PC-9 (cell line): ENCODE measurements at regions of chr1 and their contacts with region 1.

Region 1: DNA sequence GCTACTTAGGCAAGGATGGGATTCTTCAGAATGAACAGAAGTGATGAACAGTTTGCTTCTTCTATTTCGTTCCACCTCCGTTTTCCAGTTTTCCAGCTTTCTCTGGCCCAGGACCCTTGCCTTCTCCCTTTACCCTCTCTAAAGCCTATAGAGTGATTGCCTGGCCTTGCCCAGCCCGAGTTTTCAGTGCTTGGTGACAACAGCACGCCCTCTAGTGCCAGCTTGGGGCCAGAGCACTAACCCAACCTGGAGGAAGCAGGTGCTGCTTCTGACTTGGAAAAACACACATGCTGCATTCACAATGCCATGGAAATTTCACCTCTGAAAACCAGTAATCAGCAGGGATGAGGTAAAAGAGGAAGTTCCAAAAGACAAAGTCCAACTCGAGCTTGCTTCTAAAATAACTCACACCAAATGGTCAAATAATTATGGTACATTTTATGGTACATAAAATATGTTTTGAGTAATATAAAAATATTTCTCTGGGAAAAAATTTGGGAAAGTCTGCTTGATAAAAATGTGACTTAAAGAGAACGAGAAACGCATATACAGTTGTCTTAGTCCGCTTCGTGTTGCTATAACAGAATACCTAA is 26.1 kb downstream of the UBE2T start:
- DNase-seq: peak; percentile 45 to 72
- H3K4me3 ChIP-seq: no peak overlapping the region
- H3K27ac ChIP-seq: no peak overlapping the region
- H3K4me1 ChIP-seq: no peaks in the 10 kb centered on the region
- H3K27me3 ChIP-seq: no peaks in the 10 kb centered on the region
- CTCF ChIP-seq: peak; percentile 95

Region 2: GRCh38 chr1:202184750-202185460 is 130.8 kb before region 1 on chr1:
- CTCF ChIA-PET with region 1: interaction called, 6 read pairs
- POLR2A ChIA-PET with region 1: no interaction called
- intact Hi-C with region 1: loop called (anchors 1 kb)
- DNase-seq: peak; percentile 81 to 84
- H3K4me3 ChIP-seq: no peak overlapping the region
- H3K27ac ChIP-seq: no peak overlapping the region
- H3K4me1 ChIP-seq: no peaks in the 10 kb centered on the region
- H3K27me3 ChIP-seq: peaks cover 5% of the 10 kb centered on the region; the same call in 1 of the 2 replicates
- CTCF ChIP-seq: peak; percentile 85

Region 3: DNA sequence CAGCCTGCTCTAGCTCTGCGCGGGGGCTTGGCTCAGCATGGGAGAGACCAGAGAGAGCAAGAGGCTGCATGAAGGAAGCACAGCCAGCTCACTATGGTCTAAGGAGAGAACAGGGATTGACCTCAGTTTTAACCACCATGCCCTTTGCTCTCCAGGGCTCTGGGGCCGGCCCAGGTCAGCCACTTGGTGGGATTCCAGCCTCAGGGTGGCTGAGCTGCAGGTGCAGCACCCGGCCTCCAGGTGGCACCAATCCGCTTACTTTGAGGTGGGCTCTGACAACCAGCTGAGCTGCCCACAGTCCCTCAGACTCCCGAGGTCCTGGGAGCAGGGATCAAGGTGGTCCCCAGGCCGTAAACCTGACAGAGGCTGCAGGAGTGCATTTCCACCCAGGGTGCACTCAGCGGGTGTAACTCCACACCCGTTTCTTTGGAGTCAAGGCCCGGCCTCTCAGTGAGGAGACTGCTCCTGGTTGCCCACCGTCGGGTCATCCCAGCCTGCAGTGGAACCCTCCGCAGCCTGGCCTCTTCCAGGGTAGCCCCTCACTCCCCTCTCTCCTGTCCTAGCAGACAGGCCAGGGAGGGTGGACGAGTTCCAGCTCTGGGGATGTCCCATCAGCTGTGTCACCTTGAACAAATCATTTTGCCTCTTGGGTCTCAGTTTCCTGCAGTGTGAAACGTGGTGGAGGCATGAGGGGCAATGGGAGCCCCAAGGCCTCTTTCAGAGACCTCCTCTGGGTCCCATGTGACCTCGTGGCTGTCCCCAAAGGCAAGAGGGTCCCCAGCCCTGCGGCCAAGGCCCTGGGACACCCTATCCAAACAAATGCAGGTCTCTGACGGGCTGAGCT is 122.7 kb before region 1 on chr1:
- CTCF ChIA-PET with region 1: interaction called, 15 read pairs
- POLR2A ChIA-PET with region 1: interaction called, 3 read pairs
- intact Hi-C with region 1: loop called (anchors 1 kb)
- DNase-seq: peak; percentile 41 to 71
- H3K4me3 ChIP-seq: no peak overlapping the region
- H3K27ac ChIP-seq: no peak overlapping the region
- H3K4me1 ChIP-seq: peaks cover 5% of the 10 kb centered on the region
- H3K27me3 ChIP-seq: peaks cover 7% of the 10 kb centered on the region; the same call in 1 of the 2 replicates
- CTCF ChIP-seq: peak; percentile 92

Region 4: GRCh38 chr1:202274611-202275010 is 41.1 kb before region 1 on chr1:
- CTCF ChIA-PET with region 1: no interaction called
- POLR2A ChIA-PET with region 1: no interaction called
- intact Hi-C with region 1: loop called (anchors 5 kb)
- DNase-seq: peak; percentile 24 to 34
- H3K4me3 ChIP-seq: no peak overlapping the region
- H3K27ac ChIP-seq: no peak overlapping the region
- H3K4me1 ChIP-seq: 0 out of 2 replicates have a peak, but pooled peaks cover 2% of the 10 kb centered on the region
- H3K27me3 ChIP-seq: peaks cover 17% of the 10 kb centered on the region
- CTCF ChIP-seq: peak; percentile 69

Region 5: GRCh38 chr1:202283379-202283844 is 32.3 kb before region 1 on chr1:
- CTCF ChIA-PET with region 1: interaction called, 13 read pairs
- POLR2A ChIA-PET with region 1: no interaction called
- intact Hi-C with region 1: no loop called
- DNase-seq: peak; percentile 88 to 91
- H3K4me3 ChIP-seq: no peak overlapping the region
- H3K27ac ChIP-seq: peak overlapping the region; percentile 39; the same call in 1 of the 2 replicates
- H3K4me1 ChIP-seq: peaks cover 39% of the 10 kb centered on the region
- H3K27me3 ChIP-seq: no peaks in the 10 kb centered on the region
- CTCF ChIP-seq: no peak

Region 6: DNA sequence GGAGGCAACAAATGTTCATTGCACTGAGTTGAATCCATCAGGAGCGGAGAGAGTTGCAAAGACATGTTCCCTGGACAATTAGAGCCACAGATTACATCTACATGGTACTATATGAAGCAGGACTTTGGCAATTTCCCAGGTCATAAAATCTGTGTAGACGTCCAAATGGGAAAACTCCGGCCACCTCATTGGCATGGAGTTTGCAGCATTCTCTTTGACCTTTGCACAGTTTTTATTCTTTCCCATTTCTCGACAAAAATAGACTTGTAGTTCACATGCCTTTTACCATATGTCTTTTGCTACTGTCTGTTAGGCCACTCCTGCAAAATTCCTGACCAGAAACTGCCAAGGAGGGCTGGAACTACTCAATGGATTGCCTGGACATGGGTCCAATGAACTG is 22.1 kb before region 1 on chr1:
- CTCF ChIA-PET with region 1: no interaction called
- POLR2A ChIA-PET with region 1: no interaction called
- intact Hi-C with region 1: no loop called
- DNase-seq: peak in 1 of 2 experiments; percentile 9
- H3K4me3 ChIP-seq: no peak overlapping the region
- H3K27ac ChIP-seq: no peak overlapping the region
- H3K4me1 ChIP-seq: peaks cover 17% of the 10 kb centered on the region
- H3K27me3 ChIP-seq: no peaks in the 10 kb centered on the region
- CTCF ChIP-seq: no peak